ENCODE measurements at regions of chr2 and their contacts with region 1.

Region 1: DNA sequence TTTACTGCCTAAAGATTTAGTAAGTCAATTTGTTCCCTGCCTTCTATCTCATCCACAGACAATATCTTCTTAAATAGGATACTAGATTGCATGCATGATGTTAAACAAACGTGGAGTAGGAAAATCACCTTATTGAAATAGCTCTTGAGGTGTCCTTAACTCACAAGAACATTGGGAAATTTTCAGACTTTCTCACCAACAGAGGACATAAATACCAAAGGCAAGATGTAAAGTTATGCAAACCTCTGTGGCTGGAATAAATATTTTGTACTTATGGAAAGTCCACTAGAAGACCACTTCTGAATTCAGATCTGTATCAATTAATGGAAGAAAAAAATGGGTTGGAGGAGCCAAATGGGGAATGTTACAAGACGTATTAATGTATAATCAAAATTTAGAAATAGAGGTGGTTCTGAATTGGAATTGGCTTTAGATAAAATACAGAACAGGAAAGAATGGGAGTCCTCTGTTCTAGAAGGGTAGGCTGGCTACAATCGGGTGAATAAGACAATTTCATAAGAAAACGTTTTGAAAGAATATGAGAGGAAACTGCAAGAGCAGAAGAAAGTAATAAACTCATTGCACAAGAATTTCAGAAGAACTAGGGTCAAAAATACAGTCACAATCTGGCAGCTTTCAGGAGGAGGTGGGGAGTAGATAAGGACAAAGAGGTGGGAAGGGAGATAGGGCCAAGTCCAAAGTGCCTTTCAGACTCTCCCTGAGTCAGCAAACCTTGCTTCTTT is 69.3 kb upstream of the FN1 start:
- DNase-seq: peak; percentile 89
- ATAC-seq: peak; percentile 62
- H3K4me3 ChIP-seq: no peak overlapping the region
- H3K27ac ChIP-seq: no peak overlapping the region; the same call in 1 of the 2 replicates
- H3K4me1 ChIP-seq: peaks cover 10% of the 10 kb centered on the region
- H3K27me3 ChIP-seq: no peaks in the 10 kb centered on the region
- CTCF ChIP-seq: no peak
- POLR2A ChIP-seq: no peak
- RAD21 ChIP-seq: no peak

Region 2: GRCh38 chr2:215466097-215466909 is 38.9 kb before region 1 on chr2:
- CTCF ChIA-PET with region 1: no interaction called
- POLR2A ChIA-PET with region 1: no interaction called
- dilution Hi-C with region 1: no loop called
- in situ Hi-C with region 1: no loop called
- intact Hi-C with region 1: loop called (anchors 5 kb)
- DNase-seq: peak; percentile 50
- ATAC-seq: peak; percentile 72
- H3K4me3 ChIP-seq: no peak overlapping the region
- H3K27ac ChIP-seq: no peak overlapping the region
- H3K4me1 ChIP-seq: peaks cover 15% of the 10 kb centered on the region
- H3K27me3 ChIP-seq: no peaks in the 10 kb centered on the region
- CTCF ChIP-seq: no peak
- POLR2A ChIP-seq: no peak
- RAD21 ChIP-seq: no peak

Region 3: DNA sequence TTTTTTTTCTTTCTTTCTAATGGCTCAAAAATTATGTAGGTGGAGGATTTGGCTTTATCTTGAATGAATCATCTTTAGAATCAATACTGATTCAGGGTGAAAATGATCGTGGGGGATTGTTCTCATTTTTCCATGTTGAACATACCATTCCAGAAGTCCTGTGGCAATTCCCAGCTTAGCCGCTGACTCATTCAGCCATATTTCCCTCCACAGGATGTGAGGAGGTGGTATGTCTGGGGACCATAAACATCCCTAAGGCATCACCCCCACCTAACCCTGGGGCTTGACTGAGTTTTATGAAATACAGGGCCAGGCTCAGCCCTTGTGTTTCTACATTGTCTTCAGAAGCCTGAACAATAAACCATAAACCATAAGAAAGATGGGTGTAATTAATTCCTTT is 23.3 kb after region 1 on chr2:
- CTCF ChIA-PET with region 1: no interaction called
- POLR2A ChIA-PET with region 1: no interaction called
- dilution Hi-C with region 1: no loop called
- in situ Hi-C with region 1: no loop called
- intact Hi-C with region 1: no loop called
- DNase-seq: peak; percentile 99
- ATAC-seq: peak; percentile 70
- H3K4me3 ChIP-seq: no peak overlapping the region
- H3K27ac ChIP-seq: peak overlapping the region; percentile 94; the same call in 1 of the 2 replicates
- H3K4me1 ChIP-seq: peaks cover 17% of the 10 kb centered on the region
- H3K27me3 ChIP-seq: no peaks in the 10 kb centered on the region
- CTCF ChIP-seq: no peak
- POLR2A ChIP-seq: no peak
- RAD21 ChIP-seq: peak; percentile 50

Region 4: GRCh38 chr2:215540650-215541049 is 35.4 kb after region 1 on chr2:
- CTCF ChIA-PET with region 1: no interaction called
- POLR2A ChIA-PET with region 1: interaction called, 10 read pairs
- dilution Hi-C with region 1: no loop called
- in situ Hi-C with region 1: no loop called
- intact Hi-C with region 1: no loop called
- DNase-seq: peak; percentile 97
- ATAC-seq: peak; percentile 73
- H3K4me3 ChIP-seq: no peak overlapping the region
- H3K27ac ChIP-seq: peak overlapping the region; percentile 56; the same call in 1 of the 2 replicates
- H3K4me1 ChIP-seq: peaks cover 11% of the 10 kb centered on the region
- H3K27me3 ChIP-seq: no peaks in the 10 kb centered on the region
- CTCF ChIP-seq: no peak
- POLR2A ChIP-seq: no peak
- RAD21 ChIP-seq: no peak

Measured in IMR-90 (cell line).